ENCODE measurements at regions of chr9 and their contacts with region 1.

Region 1: GRCh38 chr9:106916479-106917240 is 53.7 kb downstream of the ZNF462 start:
- DNase-seq: peak in 1 of 2 donors; percentile 77
- H3K4me3 ChIP-seq: no peak overlapping the region
- H3K27ac ChIP-seq: peak overlapping the region in 1 of 2 donors; percentile 73
- H3K4me1 ChIP-seq: peaks cover 0 to 17% of the 10 kb centered on the region in 2 donors
- H3K27me3 ChIP-seq: no peaks in the 10 kb centered on the region
- CTCF ChIP-seq: no peak
- POLR2A ChIP-seq: no peak

Region 2: DNA sequence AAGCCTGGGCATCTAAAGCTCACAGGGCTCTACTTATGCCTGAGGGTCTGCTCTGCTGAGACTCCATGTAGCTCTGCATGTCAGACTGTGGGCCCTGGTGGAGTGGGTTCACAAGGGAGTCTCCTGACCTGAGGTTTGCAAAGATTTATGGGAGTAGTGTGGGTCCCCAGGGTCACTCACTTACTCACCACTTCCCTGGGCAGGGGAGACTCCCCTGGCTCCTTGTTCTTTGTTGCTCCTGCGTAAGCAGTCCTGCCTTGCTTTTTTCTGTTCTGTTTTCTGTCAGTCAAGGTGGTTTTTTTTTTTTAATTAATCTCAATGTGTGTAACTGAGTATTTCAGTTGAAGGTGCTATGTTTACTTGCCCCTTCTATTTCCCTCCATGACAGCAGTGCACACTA is 965.8 kb before region 1 on chr9:
- intact Hi-C with region 1: no loop called
- DNase-seq: no peak
- H3K4me3 ChIP-seq: no peak overlapping the region
- H3K27ac ChIP-seq: no peak overlapping the region
- H3K4me1 ChIP-seq: no peaks in the 10 kb centered on the region
- H3K27me3 ChIP-seq: no peaks in the 10 kb centered on the region
- CTCF ChIP-seq: no peak
- POLR2A ChIP-seq: no peak

Region 3: DNA sequence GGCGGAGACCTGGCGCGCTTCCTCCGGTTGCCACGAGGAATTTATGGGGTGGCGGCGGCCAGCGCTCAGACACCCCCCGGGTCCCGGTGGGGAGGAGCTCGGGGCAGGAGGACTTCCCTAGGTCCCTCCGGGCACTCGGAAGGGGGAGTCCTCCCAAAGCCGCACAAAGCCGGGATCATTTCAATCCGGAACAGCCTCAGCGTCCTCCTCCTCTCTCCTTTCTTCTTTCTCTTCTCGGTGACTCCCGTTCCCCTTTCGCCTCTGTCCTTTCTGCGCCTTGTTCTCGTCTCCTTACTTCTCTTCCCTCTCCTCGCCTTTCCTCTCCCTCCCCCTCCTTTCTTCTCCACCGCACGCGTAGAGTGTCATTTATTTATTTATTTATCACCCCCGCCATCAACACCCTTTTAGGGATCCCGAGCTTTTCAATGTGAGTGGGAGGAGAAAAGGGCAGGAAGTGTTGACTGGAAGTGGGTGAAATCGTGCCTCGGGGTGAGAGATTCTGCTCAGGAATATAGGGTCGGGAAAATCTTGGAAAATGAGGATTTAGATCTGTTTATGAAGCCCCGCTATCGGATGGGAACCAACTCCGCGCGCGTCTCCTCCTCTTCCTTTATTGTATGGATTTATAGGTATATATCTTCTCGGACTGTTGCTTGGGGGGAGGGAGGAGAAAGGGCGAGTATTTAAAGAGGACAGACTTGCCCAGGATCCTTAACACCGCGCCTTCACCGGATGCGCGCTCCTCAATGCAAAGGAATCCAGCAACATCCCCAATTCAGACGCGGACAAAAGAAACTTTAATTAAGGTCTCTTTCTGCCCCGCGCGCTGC is 55.7 kb before region 1 on chr9:
- intact Hi-C with region 1: loop called (anchors 2 kb)
- DNase-seq: peak; percentile 33 to 60
- H3K4me3 ChIP-seq: peak overlapping the region; percentile 65 to 77 (median 66)
- H3K27ac ChIP-seq: peak overlapping the region; percentile 92
- H3K4me1 ChIP-seq: peaks cover 0 to 3% of the 10 kb centered on the region in 2 donors
- H3K27me3 ChIP-seq: peaks cover 0 to 4% of the 10 kb centered on the region in 2 donors
- CTCF ChIP-seq: peak in 1 of 3 donors; percentile 15
- POLR2A ChIP-seq: no peak